Gastrocnemius medialis (tissue), 4 donors: ENCODE measurements at regions of chr3 and their contacts with region 1.

Region 1: DNA sequence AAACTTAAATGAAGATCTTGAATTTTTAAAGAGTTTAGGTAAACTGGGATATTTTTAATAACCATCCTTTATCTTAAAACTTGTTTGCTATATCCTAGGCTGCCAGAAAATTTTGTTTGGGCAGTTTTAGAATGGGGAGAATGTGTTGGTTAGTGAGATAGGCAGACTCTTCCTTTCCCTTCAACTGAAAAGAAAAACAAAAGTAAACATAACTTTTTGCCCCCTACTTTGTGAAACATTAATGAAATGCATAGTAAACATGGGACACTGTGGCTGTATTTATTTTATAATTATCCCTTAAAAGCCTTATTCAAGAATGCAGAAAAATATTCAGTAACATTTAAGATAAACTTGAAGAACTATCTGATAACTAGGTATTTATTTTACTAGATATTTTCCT is 31.0 kb downstream of the SETD5 start:
- DNase-seq: no peak
- ATAC-seq: no peak
- H3K4me3 ChIP-seq: no peak overlapping the region
- H3K27ac ChIP-seq: no peak overlapping the region
- H3K4me1 ChIP-seq: peaks cover 12 to 16% of the 10 kb centered on the region in 2 donors
- H3K27me3 ChIP-seq: no peaks in the 10 kb centered on the region
- CTCF ChIP-seq: no peak
- POLR2A ChIP-seq: no peak

Region 2: DNA sequence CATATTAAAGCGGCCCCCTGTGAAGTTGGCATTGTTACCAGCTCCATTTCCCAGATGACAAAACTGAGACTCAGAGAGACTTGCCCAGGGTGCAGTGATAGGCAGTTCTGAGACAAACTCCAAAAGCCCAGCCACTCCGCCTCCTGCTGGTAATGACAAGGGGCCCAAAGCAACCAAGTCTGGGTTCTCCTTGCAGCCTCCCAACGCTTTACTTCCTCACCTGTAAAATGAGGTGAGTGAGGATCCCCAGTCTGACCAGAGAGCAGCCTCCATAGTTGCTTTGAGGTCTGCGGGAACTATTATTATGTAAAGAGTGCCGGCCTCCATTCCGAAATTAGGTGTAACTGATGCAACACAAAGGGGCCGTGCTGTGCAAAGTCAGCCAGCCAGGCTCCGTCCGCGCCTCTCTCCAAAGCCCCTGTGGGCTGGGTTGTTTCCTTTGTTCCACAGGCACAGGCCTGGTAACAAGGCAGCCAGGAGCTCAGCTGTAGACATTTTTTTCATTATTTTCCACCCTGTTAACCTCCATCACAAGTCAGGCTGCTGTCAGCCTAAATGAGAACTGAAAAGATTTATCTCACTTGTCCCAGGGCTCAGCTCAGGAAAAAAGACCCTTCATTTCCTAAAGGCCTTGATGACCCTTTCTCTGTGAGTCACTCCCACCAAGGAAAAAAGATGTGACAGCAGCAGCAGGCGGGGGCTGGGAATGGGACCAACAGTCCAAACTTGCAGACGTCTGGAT is 326.0 kb before region 1 on chr3:
- in situ Hi-C with region 1: no loop called
- intact Hi-C with region 1: no loop called
- DNase-seq: no peak
- ATAC-seq: no peak
- H3K4me3 ChIP-seq: no peak overlapping the region
- H3K27ac ChIP-seq: no peak overlapping the region
- H3K4me1 ChIP-seq: no peaks in the 10 kb centered on the region
- H3K27me3 ChIP-seq: no peaks in the 10 kb centered on the region
- CTCF ChIP-seq: no peak
- POLR2A ChIP-seq: no peak

Region 3: GRCh38 chr3:9473496-9474065 is 45.2 kb after region 1 on chr3:
- in situ Hi-C with region 1: no loop called
- intact Hi-C with region 1: loop called (anchors 5 kb)
- DNase-seq: no peak
- ATAC-seq: no peak
- H3K4me3 ChIP-seq: no peak overlapping the region
- H3K27ac ChIP-seq: no peak overlapping the region
- H3K4me1 ChIP-seq: no peaks in the 10 kb centered on the region
- H3K27me3 ChIP-seq: no peaks in the 10 kb centered on the region
- CTCF ChIP-seq: no peak
- POLR2A ChIP-seq: no peak